Breast epithelium (tissue), 4 donors: ENCODE measurements at regions of chr16 and their contacts with region 1.

Region 1: DNA sequence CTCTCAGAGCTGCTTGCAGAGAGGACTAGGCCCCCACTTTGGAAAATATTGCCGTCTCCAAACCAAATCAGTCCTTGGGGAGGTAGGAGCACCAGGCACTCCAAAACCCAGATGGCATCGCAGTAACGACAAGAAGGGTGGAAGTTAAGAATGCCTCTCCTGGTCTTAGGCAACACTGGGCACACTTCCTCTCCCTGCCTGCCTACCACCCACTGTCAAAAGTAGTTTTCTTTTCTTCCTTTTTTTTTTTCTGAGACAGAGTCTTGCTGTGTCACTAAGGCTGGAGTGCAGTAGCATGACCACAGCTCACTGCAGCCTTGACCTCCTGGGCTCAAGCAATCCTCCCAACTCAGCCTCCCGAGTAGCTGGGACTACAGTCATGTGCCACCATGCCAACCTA is 47.2 kb downstream of the SRL start:
- DNase-seq: no peak
- H3K4me3 ChIP-seq: no peak overlapping the region
- H3K27ac ChIP-seq: no peak overlapping the region
- H3K4me1 ChIP-seq: no peaks in the 10 kb centered on the region
- H3K27me3 ChIP-seq: no peaks in the 10 kb centered on the region
- CTCF ChIP-seq: no peak
- POLR2A ChIP-seq: no peak

Region 2: DNA sequence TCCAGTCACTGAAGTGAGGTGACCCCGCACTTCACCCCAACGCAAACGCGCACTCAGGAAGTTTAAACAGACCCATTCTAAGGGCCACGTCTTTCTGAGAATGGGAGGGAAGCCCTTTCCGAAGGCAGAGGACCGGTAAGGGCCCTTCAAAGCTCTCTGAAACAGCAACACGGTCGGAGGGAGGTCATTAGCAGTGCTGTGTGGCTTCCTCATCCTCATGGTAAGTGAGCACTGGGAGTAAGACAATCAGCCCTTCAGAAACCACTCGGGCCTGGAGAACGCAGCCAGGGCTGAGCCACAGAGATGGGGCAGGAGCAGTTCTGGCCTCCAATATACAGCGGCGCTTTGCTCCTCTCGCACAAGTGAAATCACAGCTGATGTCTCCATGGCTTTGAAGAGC is 23.5 kb after region 1 on chr16:
- intact Hi-C with region 1: loop called (anchors 1 kb)
- DNase-seq: no peak
- H3K4me3 ChIP-seq: peak overlapping the region in 1 of 3 donors; percentile 25
- H3K27ac ChIP-seq: peak overlapping the region in 1 of 2 donors; percentile 66
- H3K4me1 ChIP-seq: no peaks in the 10 kb centered on the region
- H3K27me3 ChIP-seq: no peaks in the 10 kb centered on the region
- CTCF ChIP-seq: no peak
- POLR2A ChIP-seq: no peak